Esophagus muscularis mucosa (tissue), 4 donors: ENCODE measurements at regions of chr12 and their contacts with region 1.

Region 1: DNA sequence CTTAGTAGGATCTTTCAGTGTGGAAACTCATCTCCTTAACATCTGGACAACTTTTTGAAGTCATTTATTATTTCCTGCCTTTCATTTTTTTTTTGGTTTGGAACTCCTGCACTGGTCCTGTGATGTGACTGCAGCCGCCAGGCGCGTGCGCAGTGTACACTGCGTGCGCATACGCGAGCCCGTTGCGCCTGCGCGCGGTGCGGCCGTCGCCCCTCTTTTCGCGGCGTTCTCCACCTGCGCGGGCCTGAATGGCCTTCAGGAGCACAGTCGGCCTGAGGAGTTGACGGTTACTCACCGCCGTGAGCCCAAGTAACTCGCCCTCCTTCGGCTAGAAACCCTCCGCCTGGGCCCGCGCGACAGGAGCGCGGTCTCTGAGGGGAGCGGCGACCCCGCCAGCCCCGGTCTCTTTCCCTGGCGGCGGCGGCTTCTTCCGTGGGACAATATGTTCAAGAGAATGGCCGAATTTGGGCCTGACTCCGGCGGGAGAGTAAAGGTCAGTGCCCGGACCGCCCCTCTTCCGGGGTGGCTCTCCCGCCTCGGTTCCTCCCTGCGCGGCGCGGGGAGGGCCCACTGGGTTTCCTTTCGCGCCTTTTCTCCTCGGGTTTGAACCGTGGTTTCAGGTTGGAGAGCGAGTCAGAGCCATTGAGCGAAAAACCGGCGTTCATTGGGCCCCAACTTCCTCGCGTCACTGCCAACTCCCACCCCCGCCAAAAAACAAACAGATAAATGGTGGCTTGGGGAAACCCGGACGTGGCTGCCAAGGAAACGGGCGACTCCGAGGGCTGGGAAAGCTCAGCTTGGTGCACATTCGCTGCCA is at the start of gene YEATS4:
- DNase-seq: peak; percentile 96
- H3K4me3 ChIP-seq: peak within 1 kb of the TSS; percentile 75 to 91 (median 80)
- H3K27ac ChIP-seq: peak within 1 kb of the TSS; percentile 94 to 98 (median 96)
- H3K4me1 ChIP-seq: peaks cover 11 to 32% (median 25%) of the 10 kb centered on the region in 4 donors
- H3K27me3 ChIP-seq: no peaks in the 10 kb centered on the region
- CTCF ChIP-seq: peak in 1 of 3 experiments; percentile 12
- EP300 ChIP-seq: no peak
- POLR2A ChIP-seq: peak; percentile 16
- total RNA-seq, gene YEATS4: 5.7 to 17.6 (median 11.5) TPM

Region 2: DNA sequence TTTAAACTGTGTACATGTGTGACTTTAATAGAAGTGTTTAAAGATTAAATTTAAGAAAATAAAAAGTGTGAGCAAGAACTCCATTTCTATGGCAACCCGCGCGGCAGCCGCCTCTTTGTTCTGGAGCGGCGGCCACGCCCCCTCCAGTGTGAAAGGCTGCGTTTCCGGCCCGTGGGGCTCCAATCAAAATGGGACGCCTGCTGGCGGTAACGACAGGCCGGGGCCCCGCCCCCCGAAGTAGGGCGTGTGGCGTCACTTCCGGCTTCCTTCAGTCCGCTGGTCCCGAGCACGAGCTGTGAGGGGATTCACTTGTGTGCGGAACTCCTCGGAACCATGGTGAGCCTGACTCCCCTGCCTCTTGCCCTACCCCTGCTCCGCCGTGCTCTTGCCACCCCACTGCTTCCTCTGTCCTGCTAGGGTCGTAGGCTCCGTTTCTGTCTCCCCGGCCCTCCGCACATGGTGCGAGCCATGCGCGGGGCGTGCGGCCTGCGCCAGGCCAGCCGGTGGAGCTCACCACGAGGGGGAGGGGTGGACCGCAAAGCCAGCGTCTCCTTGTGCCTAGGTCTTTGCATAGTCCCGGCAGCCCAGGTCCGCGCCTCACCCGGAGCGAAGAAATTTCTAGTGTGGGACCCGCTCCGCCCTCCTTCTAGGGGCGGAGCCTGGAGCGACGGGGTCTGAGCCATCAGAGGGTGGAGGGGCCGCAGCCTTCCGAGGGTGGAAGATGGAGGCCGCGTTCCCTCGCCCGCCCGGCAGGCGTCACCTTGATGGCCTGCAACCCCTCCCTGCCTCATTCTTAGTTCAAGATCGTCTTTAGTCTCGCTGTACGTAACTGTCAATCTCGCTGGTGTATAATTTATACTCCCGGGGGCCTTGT is 225.7 kb after region 1 on chr12 and contains the start of gene CCT2:
- intact Hi-C with region 1: loop called (anchors 5 kb)
- DNase-seq: peak; percentile 98
- H3K4me3 ChIP-seq: peak within 1 kb of the TSS; percentile 82 to 99 (median 92)
- H3K27ac ChIP-seq: peak within 1 kb of the TSS; percentile 85 to 93 (median 90)
- H3K4me1 ChIP-seq: peaks cover 9 to 17% (median 13%) of the 10 kb centered on the region in 4 donors
- H3K27me3 ChIP-seq: no peaks in the 10 kb centered on the region
- CTCF ChIP-seq: peak; percentile 8 to 44 (median 20)
- EP300 ChIP-seq: no peak
- POLR2A ChIP-seq: peak; percentile 71
- total RNA-seq, gene CCT2: 86.4 to 137 (median 122) TPM

Region 3: DNA sequence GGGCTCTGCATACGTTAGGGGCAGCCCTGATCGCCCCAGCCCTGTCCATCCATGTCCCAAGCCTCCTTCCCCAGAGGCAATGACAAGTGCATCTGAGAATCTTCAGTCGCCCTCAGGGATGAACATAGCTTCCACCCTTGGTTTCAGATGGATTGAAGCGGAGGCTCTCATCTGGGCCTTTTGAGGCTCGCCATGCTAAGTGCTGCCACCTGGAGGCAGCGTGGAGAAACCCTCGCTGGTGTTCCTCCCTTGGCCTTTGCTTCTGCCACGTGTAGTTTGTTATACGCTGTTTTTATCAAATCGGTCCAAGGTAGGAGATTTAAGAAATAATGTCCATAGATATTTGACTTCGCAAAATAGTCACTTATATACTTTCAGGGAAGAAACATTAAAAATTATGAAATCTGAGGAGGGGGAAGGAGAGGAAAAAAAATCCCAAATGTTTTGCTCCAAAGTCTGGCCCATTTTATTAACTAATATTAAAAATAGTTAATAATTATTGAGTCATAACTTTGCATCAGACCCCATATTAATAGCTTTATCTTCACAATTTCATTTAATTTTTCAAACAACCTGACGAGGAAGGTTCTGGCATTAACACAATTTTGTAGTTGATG is 279.8 kb after region 1 on chr12:
- intact Hi-C with region 1: loop called (anchors 5 kb)
- DNase-seq: no peak
- H3K4me3 ChIP-seq: no peak overlapping the region
- H3K27ac ChIP-seq: no peak overlapping the region
- H3K4me1 ChIP-seq: peaks cover 0 to 3% (median 0%) of the 10 kb centered on the region in 4 donors
- H3K27me3 ChIP-seq: no peaks in the 10 kb centered on the region
- CTCF ChIP-seq: peak; percentile 73 to 88 (median 78)
- EP300 ChIP-seq: no peak
- POLR2A ChIP-seq: no peak